ENCODE measurements at regions of chr10 and their contacts with region 1.

Region 1: GRCh38 chr10:58513188-58514110 is 777 bp downstream of the BICC1 start:
- DNase-seq: peak; percentile 56 to 83
- ATAC-seq: peak; percentile 71
- H3K4me3 ChIP-seq: peak overlapping the region; percentile 88 to 96
- H3K27ac ChIP-seq: peak overlapping the region in 1 of 2 donors; percentile 20
- H3K4me1 ChIP-seq: peaks cover 0 to 5% of the 10 kb centered on the region in 2 donors
- H3K27me3 ChIP-seq: no peaks in the 10 kb centered on the region

Region 2: DNA sequence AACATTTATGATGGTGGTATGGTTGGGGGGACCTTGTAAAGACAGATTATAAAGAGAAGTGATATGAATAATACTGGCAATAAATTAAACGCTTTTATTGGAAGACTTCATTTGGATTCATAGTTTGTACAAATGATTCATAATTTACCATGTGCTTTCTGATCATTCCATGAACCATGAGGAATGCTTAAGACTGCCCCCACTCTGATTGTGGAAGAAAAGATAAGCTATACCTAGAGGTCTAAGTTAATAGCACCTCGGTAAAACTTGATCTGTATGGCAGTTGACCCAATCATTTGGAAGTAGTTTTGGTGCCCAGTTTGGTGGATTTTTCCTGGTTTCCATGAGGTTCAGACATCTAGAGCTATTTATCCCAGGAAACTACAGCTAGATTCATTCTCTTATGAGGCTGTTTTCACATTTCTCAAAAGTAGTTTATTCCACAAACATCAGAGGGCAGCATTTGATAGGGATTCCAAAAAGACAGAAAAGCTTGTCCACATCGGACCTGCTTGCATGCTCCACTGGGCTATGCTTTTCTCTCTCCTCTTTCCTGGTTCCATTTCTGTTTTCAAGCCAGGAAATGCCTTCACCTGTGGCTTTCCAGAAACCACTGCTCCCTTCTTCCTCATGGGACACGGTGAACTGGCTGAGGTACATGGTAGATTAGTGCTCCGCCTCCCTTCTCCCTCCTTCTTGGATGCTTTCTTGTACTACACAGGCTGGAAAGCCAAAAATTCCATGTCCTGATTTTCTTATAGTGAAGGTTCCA is 99.0 kb before region 1 on chr10:
- intact Hi-C with region 1: loop called in 1 of 2 experiments (anchors 5 kb)
- DNase-seq: no peak
- ATAC-seq: peak; percentile 78
- H3K4me3 ChIP-seq: no peak overlapping the region
- H3K27ac ChIP-seq: no peak overlapping the region
- H3K4me1 ChIP-seq: no peaks in the 10 kb centered on the region
- H3K27me3 ChIP-seq: no peaks in the 10 kb centered on the region

Region 3: GRCh38 chr10:58435297-58435985 is 78.0 kb before region 1 on chr10:
- intact Hi-C with region 1: loop called in 1 of 2 experiments (anchors 5 kb)
- DNase-seq: peak in 1 of 2 donors; percentile 81
- ATAC-seq: peak; percentile 78
- H3K4me3 ChIP-seq: no peak overlapping the region
- H3K27ac ChIP-seq: no peak overlapping the region
- H3K4me1 ChIP-seq: peaks cover 3 to 8% of the 10 kb centered on the region in 2 donors
- H3K27me3 ChIP-seq: no peaks in the 10 kb centered on the region

Region 4: GRCh38 chr10:58475322-58476277 is 37.8 kb before region 1 on chr10:
- intact Hi-C with region 1: loop called in 1 of 2 experiments (anchors 5 kb)
- DNase-seq: no peak
- ATAC-seq: peak; percentile 51
- H3K4me3 ChIP-seq: peak overlapping the region; percentile 31 to 66
- H3K27ac ChIP-seq: peak overlapping the region; percentile 77 to 90
- H3K4me1 ChIP-seq: peaks cover 7 to 10% of the 10 kb centered on the region in 2 donors
- H3K27me3 ChIP-seq: no peaks in the 10 kb centered on the region

Measured in aorta (tissue), 5 donors.